Gastrocnemius medialis (tissue), 4 donors: ENCODE measurements at regions of chr1 and their contacts with region 1.

Region 1: DNA sequence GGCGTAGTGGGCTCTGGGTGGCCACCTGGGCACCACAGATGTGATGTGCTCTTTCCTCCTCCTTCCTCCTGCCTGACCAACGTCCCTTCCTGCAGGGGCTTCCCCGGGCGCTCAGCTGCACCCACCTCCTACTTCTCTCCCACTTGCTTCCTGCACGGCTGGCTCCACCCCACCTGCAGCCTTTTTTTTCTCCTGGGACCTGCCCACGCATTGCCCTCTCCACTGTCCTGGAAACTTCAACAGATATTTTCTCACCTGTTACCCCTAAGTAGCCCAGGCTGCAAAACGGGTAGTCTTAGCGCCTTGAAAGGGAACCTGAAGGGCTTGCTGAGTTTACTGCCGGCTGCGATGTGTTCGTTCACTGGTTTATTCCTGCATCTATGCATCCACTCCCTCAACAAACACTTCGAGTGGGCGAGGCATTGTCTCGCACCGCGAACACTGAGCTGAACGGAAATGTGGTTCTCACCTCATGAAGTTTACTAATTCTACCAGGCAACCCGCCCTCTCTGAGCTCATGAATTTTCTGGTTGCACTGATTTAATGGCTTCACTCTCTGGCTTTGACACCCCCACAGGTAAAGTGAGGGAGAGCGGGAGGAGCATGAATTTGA is 23.6 kb downstream of the ZBTB18 start:
- DNase-seq: no peak
- ATAC-seq: no peak
- H3K4me3 ChIP-seq: no peak overlapping the region
- H3K27ac ChIP-seq: no peak overlapping the region
- H3K4me1 ChIP-seq: no peaks in the 10 kb centered on the region
- H3K27me3 ChIP-seq: peaks cover 0 to 4% (median 0%) of the 10 kb centered on the region in 3 donors
- CTCF ChIP-seq: no peak
- POLR2A ChIP-seq: no peak

Region 2: GRCh38 chr1:243882276-243882675 is 192.4 kb before region 1 on chr1:
- in situ Hi-C with region 1: no loop called
- intact Hi-C with region 1: no loop called
- DNase-seq: no peak
- ATAC-seq: no peak
- H3K4me3 ChIP-seq: no peak overlapping the region
- H3K27ac ChIP-seq: no peak overlapping the region
- H3K4me1 ChIP-seq: no peaks in the 10 kb centered on the region
- H3K27me3 ChIP-seq: no peaks in the 10 kb centered on the region
- CTCF ChIP-seq: no peak
- POLR2A ChIP-seq: no peak

Region 3: GRCh38 chr1:243926803-243927279 is 147.8 kb before region 1 on chr1:
- in situ Hi-C with region 1: no loop called
- intact Hi-C with region 1: no loop called
- DNase-seq: no peak
- ATAC-seq: no peak
- H3K4me3 ChIP-seq: no peak overlapping the region
- H3K27ac ChIP-seq: no peak overlapping the region
- H3K4me1 ChIP-seq: no peaks in the 10 kb centered on the region
- H3K27me3 ChIP-seq: peaks cover 0 to 6% (median 5%) of the 10 kb centered on the region in 3 donors
- CTCF ChIP-seq: no peak
- POLR2A ChIP-seq: no peak

Region 4: DNA sequence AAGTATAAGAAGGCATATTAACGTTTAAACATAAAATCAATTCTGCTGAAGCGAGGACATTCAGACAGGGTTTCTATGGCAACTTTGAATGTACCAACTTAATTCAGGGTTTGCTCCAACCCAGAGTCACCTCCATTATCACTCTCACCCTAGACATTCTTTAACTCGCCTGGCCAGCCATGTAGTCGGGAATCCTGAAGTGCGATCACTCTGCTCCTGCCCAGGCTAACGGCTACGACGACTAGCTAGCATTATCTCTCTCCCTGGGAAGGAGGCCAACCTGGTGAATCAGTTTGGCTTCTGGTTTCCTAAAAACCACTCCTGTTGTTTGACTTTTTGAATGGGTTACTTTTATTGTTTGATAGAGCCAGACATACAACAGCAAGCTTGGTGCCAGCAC is 62.5 kb before region 1 on chr1:
- in situ Hi-C with region 1: no loop called
- intact Hi-C with region 1: loop called (anchors 10 kb)
- DNase-seq: no peak
- ATAC-seq: no peak
- H3K4me3 ChIP-seq: peak overlapping the region in 1 of 4 donors; percentile 7
- H3K27ac ChIP-seq: no peak overlapping the region
- H3K4me1 ChIP-seq: peaks cover 4 to 6% of the 10 kb centered on the region in 2 donors
- H3K27me3 ChIP-seq: peaks cover 13 to 22% (median 15%) of the 10 kb centered on the region in 3 donors
- CTCF ChIP-seq: no peak
- POLR2A ChIP-seq: no peak